ENCODE measurements at regions of chr4 and their contacts with region 1.

Region 1: GRCh38 chr4:138035781-138036258 is 206.3 kb downstream of the SLC7A11 start:
- DNase-seq: peak; percentile 90
- H3K4me3 ChIP-seq: no peak overlapping the region
- H3K27ac ChIP-seq: no peak overlapping the region
- H3K4me1 ChIP-seq: peaks cover 14% of the 10 kb centered on the region
- CTCF ChIP-seq: peak; percentile 93

Region 2: GRCh38 chr4:137819964-137820383 is 215.8 kb before region 1 on chr4:
- CTCF ChIA-PET with region 1: no interaction called
- POLR2A ChIA-PET with region 1: no interaction called
- intact Hi-C with region 1: loop called (anchors 5 kb)
- DNase-seq: peak; percentile 54
- H3K4me3 ChIP-seq: no peak overlapping the region
- H3K27ac ChIP-seq: no peak overlapping the region
- H3K4me1 ChIP-seq: no peaks in the 10 kb centered on the region
- CTCF ChIP-seq: peak; percentile 90

Region 3: GRCh38 chr4:137998666-137999429 is 37.0 kb before region 1 on chr4:
- CTCF ChIA-PET with region 1: no interaction called
- POLR2A ChIA-PET with region 1: no interaction called
- intact Hi-C with region 1: no loop called
- DNase-seq: no peak
- H3K4me3 ChIP-seq: no peak overlapping the region
- H3K27ac ChIP-seq: no peak overlapping the region
- H3K4me1 ChIP-seq: no peaks in the 10 kb centered on the region
- CTCF ChIP-seq: no peak

Region 4: DNA sequence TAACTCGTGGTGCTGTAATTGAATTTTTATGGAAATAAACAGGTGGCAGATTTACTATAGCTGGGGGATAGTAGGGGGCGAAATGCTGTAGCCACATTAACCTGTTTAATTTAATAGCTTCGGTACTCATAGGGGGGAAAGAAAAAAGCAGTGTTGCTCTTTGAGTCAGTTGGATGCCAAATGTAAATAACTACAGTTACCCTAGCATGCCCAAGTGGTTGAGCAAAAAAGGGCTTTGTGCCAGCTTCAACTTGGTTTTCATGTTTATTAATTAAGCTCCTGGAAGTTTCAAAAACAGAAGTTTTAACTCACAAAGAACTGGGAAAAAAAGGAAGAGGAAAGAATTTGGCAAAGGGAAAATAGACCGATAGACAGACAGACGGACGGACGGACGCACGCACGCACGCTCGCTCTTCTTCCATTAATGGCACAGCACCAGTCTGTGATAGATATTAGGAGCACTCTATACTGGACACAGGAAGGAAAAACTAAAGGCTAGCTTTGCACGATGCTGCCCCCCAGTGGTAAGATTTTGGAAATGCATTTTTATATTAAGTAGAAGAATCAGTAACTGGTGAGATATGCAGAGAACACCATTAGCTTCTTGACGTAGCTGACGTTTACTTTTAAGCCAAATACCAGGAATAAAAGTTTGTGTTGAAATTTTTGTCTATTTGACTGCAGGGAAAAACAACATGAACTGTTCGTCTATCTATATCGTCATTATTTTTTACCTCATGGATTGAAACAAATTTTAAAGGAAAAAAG is 54.5 kb after region 1 on chr4:
- CTCF ChIA-PET with region 1: interaction called, 3 read pairs
- POLR2A ChIA-PET with region 1: interaction called, 10 read pairs
- intact Hi-C with region 1: loop called (anchors 1 kb)
- DNase-seq: peak; percentile 66
- H3K4me3 ChIP-seq: no peak overlapping the region
- H3K27ac ChIP-seq: no peak overlapping the region
- H3K4me1 ChIP-seq: no peaks in the 10 kb centered on the region
- CTCF ChIP-seq: peak; percentile 92

Region 5: DNA sequence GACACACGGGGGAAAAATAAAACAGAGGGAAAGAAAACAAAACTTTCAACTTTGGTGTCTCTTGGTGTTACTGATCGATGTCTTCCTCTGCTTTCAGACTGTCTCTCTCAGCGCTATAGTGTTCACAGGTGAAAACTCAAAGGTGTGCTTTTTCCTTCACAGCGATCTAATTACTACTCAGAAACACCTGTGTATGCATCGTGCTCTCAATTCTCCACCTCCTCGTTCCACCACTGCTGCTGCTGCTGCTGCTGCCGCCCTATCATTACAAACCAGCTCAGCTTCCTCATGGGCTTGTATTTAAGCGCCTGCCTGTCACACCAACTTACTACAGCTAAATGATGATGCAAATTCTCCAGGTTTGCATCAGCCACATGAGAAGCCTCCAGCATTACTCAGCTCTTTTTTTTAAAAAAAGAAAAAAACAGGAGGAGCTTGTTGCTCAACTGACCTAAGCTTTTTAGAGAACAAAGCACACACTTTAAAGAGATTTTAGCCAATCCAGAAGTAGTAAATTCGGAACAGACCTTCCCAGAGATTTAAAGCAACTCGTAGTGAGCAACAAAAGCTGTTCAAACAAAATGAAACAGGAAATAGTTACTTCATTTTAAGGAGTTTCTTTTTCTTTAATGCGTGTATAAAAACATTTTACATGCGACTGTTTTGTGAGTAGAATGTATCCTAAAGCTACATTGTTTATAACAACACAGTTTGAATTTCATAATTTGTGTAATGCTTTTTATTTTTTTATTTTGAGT is 206.4 kb after region 1 on chr4 and contains the start of gene SLC7A11:
- CTCF ChIA-PET with region 1: no interaction called
- POLR2A ChIA-PET with region 1: interaction called, 4 read pairs
- intact Hi-C with region 1: loop called (anchors 10 kb)
- DNase-seq: peak; percentile 97
- H3K4me3 ChIP-seq: peak within 1 kb of the TSS; percentile 76
- H3K27ac ChIP-seq: peak within 1 kb of the TSS; percentile 91
- H3K4me1 ChIP-seq: peaks cover 30% of the 10 kb centered on the region
- CTCF ChIP-seq: no peak
- total RNA-seq, gene SLC7A11: 5.2 and 5.7 TPM in 2 replicates

Region 6: GRCh38 chr4:138576684-138577083 is 540.9 kb after region 1 on chr4:
- CTCF ChIA-PET with region 1: no interaction called
- POLR2A ChIA-PET with region 1: no interaction called
- intact Hi-C with region 1: loop called (anchors 5 kb)
- DNase-seq: peak; percentile 24
- H3K4me3 ChIP-seq: no peak overlapping the region
- H3K27ac ChIP-seq: no peak overlapping the region
- H3K4me1 ChIP-seq: no peaks in the 10 kb centered on the region
- CTCF ChIP-seq: peak; percentile 67

Region 7: DNA sequence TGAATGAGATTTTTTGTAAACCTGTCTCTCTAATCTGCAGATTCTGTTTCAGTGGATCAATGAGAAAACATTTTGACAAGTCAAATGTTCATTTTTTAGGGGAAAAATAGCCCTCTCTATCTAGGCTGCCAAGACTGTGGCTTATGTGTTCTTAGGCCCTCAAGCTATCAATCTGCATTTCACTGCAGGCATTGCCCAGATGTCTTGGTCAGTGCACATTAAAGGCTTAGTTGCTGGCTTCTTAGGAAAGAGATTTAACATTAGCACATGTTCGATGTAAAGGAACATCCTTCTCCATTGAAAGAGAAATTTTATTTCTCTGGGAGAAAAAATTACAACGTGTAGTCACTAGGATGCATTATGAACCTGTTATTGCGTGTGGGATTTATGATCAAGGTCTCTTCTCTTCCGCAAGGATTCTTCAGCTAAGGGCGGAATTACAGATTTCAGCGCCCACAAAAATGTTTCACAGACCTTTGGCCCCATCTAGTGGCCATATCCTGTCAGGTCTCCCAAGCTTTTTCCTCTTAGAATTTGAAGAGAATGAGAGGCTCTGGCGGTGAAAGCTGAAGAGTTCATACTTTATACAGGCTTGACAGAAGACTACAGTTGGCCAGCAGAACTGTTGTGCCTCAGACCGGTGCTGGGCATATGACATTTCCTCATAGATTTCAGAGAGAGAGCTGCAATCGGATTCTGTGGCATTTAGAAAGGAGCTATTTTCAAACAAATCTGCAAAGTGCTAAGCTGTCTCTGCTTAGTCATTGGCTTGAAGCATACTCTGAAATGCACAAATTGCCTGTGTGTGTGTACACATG is 835.1 kb after region 1 on chr4:
- CTCF ChIA-PET with region 1: no interaction called
- POLR2A ChIA-PET with region 1: no interaction called
- intact Hi-C with region 1: loop called (anchors 2 kb)
- DNase-seq: peak; percentile 60
- H3K4me3 ChIP-seq: no peak overlapping the region
- H3K27ac ChIP-seq: no peak overlapping the region
- H3K4me1 ChIP-seq: no peaks in the 10 kb centered on the region
- CTCF ChIP-seq: peak; percentile 92

Measured in OCI-LY7 (cell line).